Adrenal gland (tissue), 19 donors: ENCODE measurements at regions of chr11 and their contacts with region 1.

Region 1: GRCh38 chr11:77140231-77140851 is 12.3 kb downstream of the MYO7A start:
- DNase-seq: peak; percentile 84 to 96 (median 93)
- H3K4me3 ChIP-seq: no peak overlapping the region
- H3K27ac ChIP-seq: peak overlapping the region; percentile 30 to 86 (median 78)
- H3K4me1 ChIP-seq: peaks cover 24 to 57% of the 10 kb centered on the region in 2 donors
- H3K27me3 ChIP-seq: no peaks in the 10 kb centered on the region
- CTCF ChIP-seq: no peak
- POLR2A ChIP-seq: peak in 1 of 2 donors; percentile 40

Region 2: DNA sequence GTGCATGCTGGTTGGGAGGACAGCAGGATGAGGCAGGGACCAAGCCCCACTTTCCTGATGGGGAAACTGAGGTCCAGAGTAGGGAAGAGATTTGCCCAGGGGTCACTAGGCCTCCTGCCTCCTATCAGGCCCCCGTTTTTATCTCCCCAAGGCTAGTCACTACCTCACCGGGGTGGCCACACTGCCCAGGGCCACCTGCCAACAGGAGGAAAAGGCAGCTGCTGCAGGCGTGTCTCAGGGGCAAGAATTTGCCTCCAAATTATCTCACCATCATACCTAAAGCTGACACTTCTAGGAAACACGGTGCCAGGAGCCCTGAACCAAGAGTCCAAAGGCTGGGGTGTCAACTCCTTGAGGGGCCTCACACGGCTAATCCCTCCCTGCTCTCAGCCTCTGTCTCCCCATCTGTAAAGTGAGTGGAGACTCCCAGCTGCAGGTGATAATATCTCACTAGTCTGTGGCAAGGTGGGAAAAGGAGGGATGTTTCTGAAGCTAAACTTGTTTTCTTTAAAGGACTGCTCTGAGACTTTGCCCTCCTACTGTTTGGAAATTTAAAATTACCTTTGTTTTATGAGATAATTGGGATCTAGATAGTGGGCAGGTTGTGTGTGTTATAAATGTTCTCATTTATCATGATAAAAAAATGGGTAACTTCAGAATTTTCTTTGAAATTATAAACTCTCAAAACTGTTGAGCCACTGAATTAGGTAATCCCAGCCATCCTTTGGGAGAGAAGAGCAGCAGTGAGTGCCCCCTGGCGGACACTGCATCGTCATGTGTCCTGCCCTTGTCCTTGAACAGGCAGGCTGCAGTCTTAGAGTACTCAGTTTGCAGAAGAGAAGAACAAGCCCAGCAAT is 47.7 kb after region 1 on chr11:
- intact Hi-C with region 1: loop called in 1 of 2 experiments (anchors 5 kb)
- DNase-seq: peak; percentile 83 to 96 (median 92)
- H3K4me3 ChIP-seq: no peak overlapping the region
- H3K27ac ChIP-seq: no peak overlapping the region
- H3K4me1 ChIP-seq: no peaks in the 10 kb centered on the region
- H3K27me3 ChIP-seq: no peaks in the 10 kb centered on the region
- CTCF ChIP-seq: peak; percentile 88 to 96 (median 95)
- POLR2A ChIP-seq: no peak